ENCODE measurements at regions of chr2 and their contacts with region 1.

Region 1: GRCh38 chr2:38959938-38960608 is 70.4 kb downstream of the ARHGEF33 start:
- DNase-seq: peak; percentile 89
- H3K4me3 ChIP-seq: peak overlapping the region in 2 of 3 experiments; percentile 24 to 34
- H3K27ac ChIP-seq: no peak overlapping the region
- H3K4me1 ChIP-seq: peaks cover 4% of the 10 kb centered on the region
- H3K27me3 ChIP-seq: peaks cover 4 to 9% of the 10 kb centered on the region in 2 experiments
- CTCF ChIP-seq: no peak
- POLR2A ChIP-seq: no peak

Region 2: DNA sequence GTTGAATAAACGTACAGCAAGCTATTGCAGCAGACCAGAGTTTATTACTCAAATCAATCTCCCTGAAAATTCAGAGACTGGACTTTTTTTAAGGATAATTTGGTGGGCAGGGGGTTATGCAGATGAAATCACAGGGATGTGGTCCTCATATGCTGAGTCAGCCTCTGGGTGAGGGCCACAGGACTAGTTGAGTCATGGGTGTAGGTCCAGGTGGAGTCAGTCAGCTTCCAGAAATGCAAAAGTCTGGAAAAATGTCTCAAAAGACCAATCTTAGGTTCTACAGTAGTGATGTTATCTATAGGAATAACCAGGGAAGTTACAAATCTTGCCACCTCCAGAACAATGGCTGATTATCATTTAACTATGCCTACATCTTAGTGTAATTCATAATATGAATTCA is 19.3 kb before region 1 on chr2:
- CTCF ChIA-PET with region 1: no interaction called
- POLR2A ChIA-PET with region 1: no interaction called
- dilution Hi-C with region 1: no loop called
- intact Hi-C with region 1: no loop called
- DNase-seq: no peak
- H3K4me3 ChIP-seq: no peak overlapping the region
- H3K27ac ChIP-seq: no peak overlapping the region
- H3K4me1 ChIP-seq: no peaks in the 10 kb centered on the region
- H3K27me3 ChIP-seq: peaks cover 0 to 1% of the 10 kb centered on the region in 2 experiments
- CTCF ChIP-seq: no peak
- POLR2A ChIP-seq: no peak

Region 3: GRCh38 chr2:39059366-39059952 is 99.4 kb after region 1 on chr2:
- CTCF ChIA-PET with region 1: no interaction called
- POLR2A ChIA-PET with region 1: no interaction called
- dilution Hi-C with region 1: no loop called
- intact Hi-C with region 1: no loop called
- DNase-seq: peak; percentile 60
- H3K4me3 ChIP-seq: no peak overlapping the region
- H3K27ac ChIP-seq: no peak overlapping the region
- H3K4me1 ChIP-seq: no peaks in the 10 kb centered on the region
- H3K27me3 ChIP-seq: no peaks in the 10 kb centered on the region
- CTCF ChIP-seq: peak; percentile 14 to 41
- POLR2A ChIP-seq: no peak

Region 4: DNA sequence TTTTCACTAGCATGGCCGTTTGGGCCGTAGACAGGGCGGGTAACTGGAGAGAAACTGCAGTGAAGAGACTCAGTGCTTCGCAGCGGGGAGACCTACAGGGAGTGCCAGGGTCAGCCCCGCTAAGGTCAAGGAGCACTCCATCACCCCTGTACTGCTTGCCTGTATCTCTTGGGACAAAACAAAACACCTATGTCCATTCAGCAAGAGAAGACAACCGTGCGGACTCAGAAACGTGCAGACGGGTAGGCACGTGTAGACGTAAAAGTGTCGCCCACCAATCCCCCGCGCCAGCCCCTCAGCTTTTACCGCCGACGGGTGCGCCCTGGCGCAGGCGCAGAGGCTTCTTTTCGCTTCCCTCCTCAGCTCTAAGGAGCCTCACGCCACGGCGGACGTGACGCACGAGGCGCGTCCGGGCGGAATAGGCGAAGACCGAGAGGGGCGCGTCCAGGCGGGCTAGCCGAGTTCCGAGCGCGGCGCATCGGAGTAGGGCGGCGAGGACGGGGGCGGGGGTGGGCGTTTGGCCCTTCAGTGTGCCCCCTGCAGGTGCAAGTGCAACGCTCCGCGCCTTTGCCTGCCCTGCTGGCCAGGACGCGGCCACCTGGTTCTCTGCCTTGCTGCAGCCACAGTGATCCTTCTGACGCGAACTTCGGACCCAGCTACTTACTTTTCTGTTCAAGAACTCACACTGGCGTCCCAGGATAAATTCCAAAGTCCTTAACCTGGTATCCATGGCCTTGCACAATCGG is 164.1 kb after region 1 on chr2:
- CTCF ChIA-PET with region 1: no interaction called
- POLR2A ChIA-PET with region 1: no interaction called
- dilution Hi-C with region 1: no loop called
- intact Hi-C with region 1: loop called (anchors 5 kb)
- DNase-seq: peak; percentile 97
- H3K4me3 ChIP-seq: peak overlapping the region; percentile 53 to 96 (median 89)
- H3K27ac ChIP-seq: peak overlapping the region; percentile 45
- H3K4me1 ChIP-seq: peaks cover 18% of the 10 kb centered on the region
- H3K27me3 ChIP-seq: no peaks in the 10 kb centered on the region
- CTCF ChIP-seq: peak; percentile 28 to 86
- POLR2A ChIP-seq: peak; percentile 96

Region 5: GRCh38 chr2:39778962-39779851 is 819.1 kb after region 1 on chr2 and contains the start of gene THUMPD2:
- CTCF ChIA-PET with region 1: no interaction called
- POLR2A ChIA-PET with region 1: no interaction called
- dilution Hi-C with region 1: no loop called
- intact Hi-C with region 1: loop called (anchors 5 kb)
- DNase-seq: peak; percentile 17
- H3K4me3 ChIP-seq: peak within 1 kb of the TSS; percentile 56 to 85 (median 77)
- H3K27ac ChIP-seq: peak within 1 kb of the TSS; percentile 72
- H3K4me1 ChIP-seq: peaks cover 17% of the 10 kb centered on the region
- H3K27me3 ChIP-seq: no peaks in the 10 kb centered on the region
- CTCF ChIP-seq: no peak
- POLR2A ChIP-seq: peak; percentile 80
- total RNA-seq, gene THUMPD2: 8.2 and 8.9 TPM in 2 replicates

Region 6: GRCh38 chr2:39938035-39938835 is 978.2 kb after region 1 on chr2:
- CTCF ChIA-PET with region 1: no interaction called
- POLR2A ChIA-PET with region 1: no interaction called
- dilution Hi-C with region 1: no loop called
- intact Hi-C with region 1: no loop called
- DNase-seq: no peak
- H3K4me3 ChIP-seq: no peak overlapping the region
- H3K27ac ChIP-seq: no peak overlapping the region
- H3K4me1 ChIP-seq: no peaks in the 10 kb centered on the region
- H3K27me3 ChIP-seq: no peaks in the 10 kb centered on the region
- CTCF ChIP-seq: no peak
- POLR2A ChIP-seq: no peak

Measured in endothelial cell of umbilical vein (primary cell).